ENCODE measurements at regions of chr1 and their contacts with region 1.

Region 1: DNA sequence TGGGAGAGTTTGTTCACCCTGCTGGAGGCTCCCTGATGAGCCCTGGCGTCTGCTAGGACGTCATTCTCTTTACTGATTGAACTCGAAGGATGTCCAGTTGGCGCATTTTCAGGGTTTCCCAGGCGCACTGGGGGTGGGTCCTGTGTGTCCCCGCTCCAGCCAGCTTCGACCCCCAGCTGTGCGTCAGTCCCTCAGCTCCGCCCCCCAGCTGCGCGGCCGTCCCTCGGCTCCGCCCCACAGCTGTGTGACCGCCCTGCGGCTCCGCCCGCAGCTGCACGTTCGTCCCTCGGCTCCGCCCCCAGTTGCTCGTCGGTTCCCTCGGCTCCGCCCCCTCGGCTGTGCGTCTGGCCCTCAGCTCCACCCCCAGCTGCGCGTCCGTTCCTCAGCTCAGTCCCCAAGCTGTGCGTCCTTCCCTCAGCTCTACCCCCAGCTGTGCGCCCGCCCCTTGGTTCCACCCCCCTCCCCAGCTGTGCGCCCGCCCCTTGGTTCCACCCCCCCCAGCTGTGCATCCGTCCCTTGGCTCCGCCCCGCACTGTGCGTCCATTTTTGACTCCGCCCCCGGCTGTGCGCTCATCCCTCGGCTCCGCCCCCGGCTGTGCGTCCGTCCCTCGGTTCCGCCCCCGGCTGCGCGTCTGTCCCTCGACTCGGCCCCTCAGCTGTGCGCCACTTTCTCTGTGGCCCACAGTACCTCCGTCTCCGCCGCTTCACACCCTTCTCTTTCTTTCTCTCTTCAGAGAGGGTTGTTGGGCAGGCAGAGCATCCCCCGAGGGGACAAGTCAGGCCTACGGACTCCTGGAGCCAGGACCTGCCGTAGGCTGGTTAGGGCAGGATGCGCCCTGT is 61.3 kb downstream of the FAAP20 start:
- DNase-seq: peak; percentile 99
- ATAC-seq: peak; percentile 94
- H3K4me3 Mint-ChIP-seq: peak overlapping the region; percentile 68
- H3K27ac Mint-ChIP-seq: peak overlapping the region; percentile 82
- H3K4me1 Mint-ChIP-seq: peaks cover 14% of the 10 kb centered on the region
- H3K27me3 Mint-ChIP-seq: no peaks in the 10 kb centered on the region

Region 2: GRCh38 chr1:1324521-1325287 is 808.6 kb before region 1 on chr1 and contains the starts of genes CPTP and INTS11:
- CTCF ChIA-PET with region 1: no interaction called
- POLR2A ChIA-PET with region 1: no interaction called
- intact Hi-C with region 1: loop called in 1 of 2 experiments (anchors 1 kb)
- DNase-seq: peak; percentile 98
- ATAC-seq: peak; percentile 90
- H3K4me3 Mint-ChIP-seq: peak within 1 kb of the TSS; percentile 80
- H3K27ac Mint-ChIP-seq: peak within 1 kb of the TSS; percentile 83
- H3K4me1 Mint-ChIP-seq: peaks cover 31% of the 10 kb centered on the region
- H3K27me3 Mint-ChIP-seq: no peaks in the 10 kb centered on the region
- total RNA-seq, gene CPTP: 9.9 to 11.4 TPM
- total RNA-seq, gene INTS11: 117 to 151 TPM

Region 3: GRCh38 chr1:2049718-2050427 is 83.4 kb before region 1 on chr1 and contains the start of gene PRKCZ:
- CTCF ChIA-PET with region 1: no interaction called
- POLR2A ChIA-PET with region 1: no interaction called
- intact Hi-C with region 1: loop called in 1 of 2 experiments (anchors 1 kb)
- DNase-seq: peak; percentile 95
- ATAC-seq: peak; percentile 98
- H3K4me3 Mint-ChIP-seq: peak within 1 kb of the TSS; percentile 68
- H3K27ac Mint-ChIP-seq: no peak within 1 kb of the TSS
- H3K4me1 Mint-ChIP-seq: peaks cover 24% of the 10 kb centered on the region
- H3K27me3 Mint-ChIP-seq: peaks cover 14% of the 10 kb centered on the region
- total RNA-seq, gene PRKCZ: 9.8 to 10.9 TPM

Region 4: GRCh38 chr1:2073382-2074230 is 59.7 kb before region 1 on chr1:
- CTCF ChIA-PET with region 1: no interaction called
- POLR2A ChIA-PET with region 1: no interaction called
- intact Hi-C with region 1: no loop called
- DNase-seq: no peak
- ATAC-seq: no peak
- H3K4me3 Mint-ChIP-seq: no peak overlapping the region
- H3K27ac Mint-ChIP-seq: no peak overlapping the region
- H3K4me1 Mint-ChIP-seq: peaks cover 10% of the 10 kb centered on the region
- H3K27me3 Mint-ChIP-seq: no peaks in the 10 kb centered on the region

Region 5: DNA sequence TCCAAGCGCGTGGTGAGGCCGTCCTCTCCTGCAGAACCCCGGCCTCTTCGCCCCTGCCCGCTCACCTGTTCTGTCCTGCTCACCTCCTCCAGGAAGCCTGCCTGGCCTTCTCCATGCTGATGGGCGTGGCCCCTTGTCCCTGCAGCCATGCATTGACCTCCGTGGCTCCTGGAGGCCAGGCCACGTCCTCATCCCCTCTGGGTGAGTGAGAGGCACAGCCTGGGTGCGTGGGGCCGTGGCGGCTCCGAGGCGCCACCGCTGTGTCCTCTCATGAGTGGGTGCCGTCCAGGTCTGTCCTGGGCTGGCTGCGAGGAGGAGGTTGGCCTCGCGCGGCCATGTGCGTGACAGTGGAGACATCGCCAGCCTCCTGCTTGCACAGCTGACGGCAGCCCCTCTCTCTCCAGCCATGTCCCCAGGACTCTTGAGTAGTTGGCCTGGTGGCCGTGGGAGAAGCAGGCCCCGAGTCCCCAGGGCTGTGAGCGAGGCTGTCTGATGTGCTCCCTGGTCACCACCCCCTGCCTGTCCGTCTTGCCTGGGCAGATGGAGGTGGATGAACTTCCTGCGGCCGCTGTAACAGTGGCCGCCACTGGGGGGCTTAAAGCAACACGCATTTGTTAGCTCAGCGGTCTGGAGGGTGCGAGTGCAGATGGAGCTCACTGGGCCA is 24.9 kb before region 1 on chr1:
- CTCF ChIA-PET with region 1: no interaction called
- POLR2A ChIA-PET with region 1: no interaction called
- intact Hi-C with region 1: no loop called
- DNase-seq: peak; percentile 29
- ATAC-seq: no peak
- H3K4me3 Mint-ChIP-seq: no peak overlapping the region
- H3K27ac Mint-ChIP-seq: no peak overlapping the region
- H3K4me1 Mint-ChIP-seq: no peaks in the 10 kb centered on the region
- H3K27me3 Mint-ChIP-seq: no peaks in the 10 kb centered on the region

Region 6: GRCh38 chr1:2121101-2121691 is 12.1 kb before region 1 on chr1:
- CTCF ChIA-PET with region 1: no interaction called
- POLR2A ChIA-PET with region 1: no interaction called
- intact Hi-C with region 1: no loop called
- DNase-seq: no peak
- ATAC-seq: no peak
- H3K4me3 Mint-ChIP-seq: no peak overlapping the region
- H3K27ac Mint-ChIP-seq: no peak overlapping the region
- H3K4me1 Mint-ChIP-seq: no peaks in the 10 kb centered on the region
- H3K27me3 Mint-ChIP-seq: no peaks in the 10 kb centered on the region

Region 7: DNA sequence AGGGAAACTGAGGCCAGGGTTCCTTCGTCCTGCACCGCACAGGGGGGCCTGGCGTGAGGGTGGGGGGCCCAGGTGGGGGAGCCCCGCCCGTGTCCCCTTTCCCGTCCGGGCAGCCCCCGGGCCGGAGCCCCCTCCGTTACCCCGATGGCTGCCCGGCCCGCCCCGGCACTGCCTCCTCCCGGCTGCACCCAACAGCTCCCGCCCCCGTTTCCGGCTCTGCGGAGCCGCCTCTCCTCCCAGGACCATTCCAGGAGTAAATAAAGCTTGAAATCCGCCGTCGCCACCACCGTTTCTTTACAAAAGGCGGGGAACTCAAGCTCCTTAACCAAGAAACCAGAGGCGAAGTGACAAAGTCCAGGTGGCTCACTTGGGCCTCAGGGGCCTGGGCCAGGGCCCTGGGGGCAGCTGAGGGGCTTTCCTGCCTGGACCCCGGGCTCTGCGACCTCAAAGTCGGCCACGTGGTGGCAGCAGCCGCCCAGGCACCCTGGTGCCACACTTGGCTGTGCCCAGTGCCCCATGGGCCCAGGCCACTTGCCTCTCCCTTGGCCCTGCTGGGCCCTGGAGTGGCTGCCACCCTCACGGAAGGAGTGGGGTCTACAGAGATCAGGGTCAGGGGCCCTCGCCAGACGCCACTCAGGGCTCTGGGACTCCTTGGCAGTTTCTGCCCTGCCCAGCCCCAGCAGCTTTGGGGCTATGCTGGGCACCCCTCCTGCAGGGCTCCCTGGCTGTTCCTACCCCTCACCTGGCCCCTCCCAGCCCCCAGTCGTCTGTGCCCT is 61.8 kb after region 1 on chr1:
- CTCF ChIA-PET with region 1: interaction called, 3 read pairs
- POLR2A ChIA-PET with region 1: no interaction called
- intact Hi-C with region 1: loop called in 1 of 2 experiments (anchors 1 kb)
- DNase-seq: peak; percentile 93
- ATAC-seq: peak; percentile 67
- H3K4me3 Mint-ChIP-seq: peak overlapping the region; percentile 77
- H3K27ac Mint-ChIP-seq: peak overlapping the region; percentile 86
- H3K4me1 Mint-ChIP-seq: peaks cover 32% of the 10 kb centered on the region
- H3K27me3 Mint-ChIP-seq: no peaks in the 10 kb centered on the region

Region 8: GRCh38 chr1:2255420-2256369 is 122.4 kb after region 1 on chr1:
- CTCF ChIA-PET with region 1: no interaction called
- POLR2A ChIA-PET with region 1: no interaction called
- intact Hi-C with region 1: loop called in 1 of 2 experiments (anchors 1 kb)
- DNase-seq: peak; percentile 87
- ATAC-seq: peak; percentile 71
- H3K4me3 Mint-ChIP-seq: no peak overlapping the region
- H3K27ac Mint-ChIP-seq: no peak overlapping the region
- H3K4me1 Mint-ChIP-seq: peaks cover 54% of the 10 kb centered on the region
- H3K27me3 Mint-ChIP-seq: no peaks in the 10 kb centered on the region

Region 9: GRCh38 chr1:2412519-2413233 is 279.4 kb after region 1 on chr1 and contains the start of gene PEX10:
- CTCF ChIA-PET with region 1: no interaction called
- POLR2A ChIA-PET with region 1: no interaction called
- intact Hi-C with region 1: loop called in 1 of 2 experiments (anchors 1 kb)
- DNase-seq: peak; percentile 100
- ATAC-seq: peak; percentile 89
- H3K4me3 Mint-ChIP-seq: peak within 1 kb of the TSS; percentile 83
- H3K27ac Mint-ChIP-seq: peak within 1 kb of the TSS; percentile 85
- H3K4me1 Mint-ChIP-seq: peaks cover 38% of the 10 kb centered on the region
- H3K27me3 Mint-ChIP-seq: no peaks in the 10 kb centered on the region
- total RNA-seq, gene PEX10: 15.1 to 17.7 TPM

Region 10: DNA sequence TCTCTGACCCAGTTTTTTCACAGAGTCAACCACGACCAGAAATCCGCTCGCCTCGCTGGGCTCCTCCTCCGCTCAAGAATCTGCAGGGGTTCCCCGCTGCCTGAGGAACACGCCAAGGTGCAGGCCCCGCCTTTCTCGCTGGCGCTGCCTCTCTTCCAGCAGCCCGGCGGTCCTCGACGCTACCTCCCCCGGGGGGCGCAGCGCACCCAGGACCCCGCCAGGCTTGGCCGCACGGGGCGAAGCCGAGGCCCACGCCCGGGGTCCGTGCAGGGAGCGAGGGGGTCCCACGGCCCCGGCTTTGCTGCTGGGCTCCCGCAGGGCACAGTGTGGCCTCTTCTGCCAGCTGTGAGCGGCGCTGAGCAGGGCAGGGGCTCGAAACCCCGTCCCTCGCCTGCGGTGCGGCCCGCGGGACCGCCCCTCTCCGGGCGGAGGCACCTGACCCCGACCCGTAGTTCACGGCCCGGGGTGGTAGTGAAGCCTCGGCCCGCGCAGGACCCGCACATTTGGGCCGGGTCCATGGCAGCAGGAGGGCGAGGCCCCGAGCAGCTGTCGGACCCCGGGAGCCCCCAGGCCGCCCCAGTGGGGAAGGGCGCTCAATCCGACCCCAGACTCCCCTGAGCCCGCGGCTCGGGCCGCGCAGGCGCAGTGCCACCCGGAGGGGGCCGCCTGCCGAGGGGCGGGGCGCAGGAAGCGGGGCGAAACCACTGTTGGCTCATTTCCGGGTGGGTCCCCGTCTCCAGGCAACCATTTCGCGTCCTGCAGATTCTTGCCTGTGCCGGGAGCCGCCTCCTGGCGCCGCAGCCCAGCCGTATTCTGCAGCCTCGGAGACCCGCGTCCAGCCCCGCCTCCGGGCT is 509.5 kb after region 1 on chr1:
- CTCF ChIA-PET with region 1: no interaction called
- POLR2A ChIA-PET with region 1: no interaction called
- intact Hi-C with region 1: loop called in 1 of 2 experiments (anchors 1 kb)
- DNase-seq: peak; percentile 97
- ATAC-seq: peak; percentile 86
- H3K4me3 Mint-ChIP-seq: peak overlapping the region; percentile 80
- H3K27ac Mint-ChIP-seq: peak overlapping the region; percentile 83
- H3K4me1 Mint-ChIP-seq: no peaks in the 10 kb centered on the region
- H3K27me3 Mint-ChIP-seq: no peaks in the 10 kb centered on the region

Measured in activated CD4-positive, alpha-beta T cell treated with anti-CD3 and anti-CD28 coated beads for 36 hours (primary cell).